Sciatic nerve (tissue), 2 donors: ENCODE measurements at regions of chr7 and their contacts with region 1.

Region 1: DNA sequence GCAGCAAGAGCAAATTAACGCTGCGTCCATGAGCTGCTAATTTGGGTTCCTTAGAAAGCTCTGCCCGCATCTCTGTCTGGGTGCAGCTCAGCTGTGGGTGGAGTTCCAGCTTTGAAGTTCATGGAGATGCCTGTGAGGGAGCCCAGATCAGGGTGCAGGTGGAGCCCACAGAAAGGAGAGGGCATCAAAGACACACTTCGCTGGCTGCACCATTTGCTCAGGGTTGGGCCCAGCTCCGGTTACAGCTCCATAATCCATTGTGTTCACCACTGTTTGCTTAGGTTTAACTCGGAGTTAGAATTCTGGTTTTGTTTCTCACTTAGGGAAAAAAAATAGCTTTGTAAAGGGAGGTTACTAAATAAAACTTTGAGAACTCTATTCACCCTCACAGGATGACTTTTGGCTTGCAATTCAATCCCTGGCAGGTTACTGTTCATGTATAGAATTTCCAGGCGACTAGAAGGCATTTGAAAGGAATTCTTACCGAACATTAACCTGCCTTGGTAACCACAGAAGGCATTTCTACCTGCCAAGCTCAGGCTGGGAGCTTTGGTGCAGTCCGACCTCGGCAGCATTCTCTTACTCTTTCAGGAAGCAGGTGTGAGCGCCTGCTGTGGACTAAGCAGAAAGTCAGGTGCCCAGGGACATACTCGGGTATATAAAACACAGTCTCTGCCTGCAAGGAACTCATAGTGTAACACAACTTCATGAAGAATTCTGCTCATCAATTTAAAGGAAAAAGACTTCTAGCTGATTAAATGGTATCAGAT is 179.5 kb upstream of the RNF32 start:
- DNase-seq: no peak
- ATAC-seq: no peak

Region 2: GRCh38 chr7:155283565-155284194 is 1177.4 kb before region 1 on chr7:
- intact Hi-C with region 1: no loop called
- DNase-seq: no peak
- ATAC-seq: no peak

Region 3: GRCh38 chr7:155815332-155816191 is 645.5 kb before region 1 on chr7:
- intact Hi-C with region 1: loop called (anchors 10 kb)
- DNase-seq: no peak
- ATAC-seq: peak; percentile 57

Region 4: DNA sequence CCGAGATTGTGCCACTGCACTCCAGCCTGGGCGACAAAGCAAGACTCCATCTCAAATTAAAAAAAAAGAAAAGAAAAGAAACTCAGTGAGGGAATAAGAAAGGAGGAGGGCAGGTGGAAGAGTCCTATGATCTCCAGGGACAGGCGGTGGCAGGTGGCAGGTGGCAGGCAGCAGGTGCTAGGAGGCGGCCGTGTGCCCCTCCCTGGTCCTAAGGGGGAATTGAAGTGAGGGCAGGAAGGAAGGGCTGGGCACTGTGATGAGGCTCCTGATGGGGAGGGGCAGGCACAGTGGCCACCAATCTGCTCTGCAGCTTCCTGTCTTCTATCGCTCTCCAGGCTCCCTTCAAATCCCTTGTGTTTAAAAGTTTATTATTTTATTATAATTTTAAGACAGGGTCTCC is 636.5 kb after region 1 on chr7:
- intact Hi-C with region 1: no loop called
- DNase-seq: no peak
- ATAC-seq: no peak

Region 5: GRCh38 chr7:157113607-157114006 is 652.6 kb after region 1 on chr7:
- intact Hi-C with region 1: loop called (anchors 5 kb)
- DNase-seq: no peak
- ATAC-seq: no peak